A673 (cell line): ENCODE measurements at regions of chr12 and their contacts with region 1.

Region 1: DNA sequence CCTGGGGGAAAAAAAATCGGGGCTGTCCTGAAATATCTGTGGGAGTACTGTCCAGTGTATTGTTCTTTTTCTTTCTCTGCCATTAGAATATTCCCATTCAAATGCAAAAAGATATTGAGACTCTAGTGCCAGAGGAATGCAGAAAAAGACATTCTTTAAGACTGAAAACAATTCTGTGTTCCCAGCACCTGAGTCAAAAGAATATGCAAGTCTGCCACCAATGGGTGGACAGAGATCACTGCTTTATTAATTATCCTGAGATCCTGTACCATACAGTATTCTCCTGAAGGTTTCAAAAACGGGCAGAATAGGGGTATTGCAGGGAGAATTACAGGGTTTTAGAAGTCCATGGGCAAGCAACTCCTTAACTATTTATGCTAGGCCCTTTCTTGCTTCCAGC is 361.8 kb downstream of the C12orf50 start:
- DNase-seq: peak; percentile 49
- H3K4me3 ChIP-seq: no peak overlapping the region
- H3K27ac ChIP-seq: no peak overlapping the region
- H3K4me1 ChIP-seq: no peaks in the 10 kb centered on the region
- H3K27me3 ChIP-seq: no peaks in the 10 kb centered on the region
- CTCF ChIP-seq: peak; percentile 56

Region 2: DNA sequence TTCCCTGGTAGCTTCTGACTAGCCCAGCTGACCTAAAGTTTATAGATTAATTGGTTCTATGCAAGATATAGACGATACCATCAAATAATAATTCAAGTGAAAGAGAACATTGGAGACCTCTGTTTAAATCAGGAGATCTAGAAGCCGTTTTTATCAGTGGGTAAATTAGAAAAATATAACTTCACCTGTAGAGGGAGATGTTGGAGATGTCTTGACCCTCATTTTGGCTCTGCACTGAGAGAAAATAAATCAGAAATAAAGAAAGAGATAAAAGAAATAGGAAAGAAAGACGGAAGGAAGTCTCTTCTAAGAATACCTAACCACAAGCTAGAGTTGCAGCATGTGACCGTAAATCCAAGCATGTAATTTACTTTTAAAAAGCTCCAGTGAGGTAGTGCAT is 322.7 kb before region 1 on chr12:
- CTCF ChIA-PET with region 1: no interaction called
- POLR2A ChIA-PET with region 1: no interaction called
- intact Hi-C with region 1: loop called (anchors 10 kb)
- DNase-seq: peak; percentile 8
- H3K4me3 ChIP-seq: no peak overlapping the region
- H3K27ac ChIP-seq: no peak overlapping the region
- H3K4me1 ChIP-seq: no peaks in the 10 kb centered on the region
- H3K27me3 ChIP-seq: no peaks in the 10 kb centered on the region
- CTCF ChIP-seq: peak; percentile 34; the same call in 1 of the 2 replicates

Region 3: GRCh38 chr12:88052686-88053085 is 385.3 kb after region 1 on chr12:
- CTCF ChIA-PET with region 1: no interaction called
- POLR2A ChIA-PET with region 1: no interaction called
- intact Hi-C with region 1: no loop called
- DNase-seq: peak; percentile 60
- H3K4me3 ChIP-seq: no peak overlapping the region
- H3K27ac ChIP-seq: no peak overlapping the region
- H3K4me1 ChIP-seq: no peaks in the 10 kb centered on the region
- H3K27me3 ChIP-seq: no peaks in the 10 kb centered on the region
- CTCF ChIP-seq: peak; percentile 65